ENCODE measurements at regions of chr1 and their contacts with region 1.

Region 1: GRCh38 chr1:168178638-168179437 is at the start of gene TIPRL:
- DNase-seq: peak; percentile 97
- ATAC-seq: peak; percentile 90
- H3K4me3 Mint-ChIP-seq: no peak within 1 kb of the TSS
- H3K27ac Mint-ChIP-seq: no peak within 1 kb of the TSS
- H3K4me1 Mint-ChIP-seq: peaks cover 9% of the 10 kb centered on the region
- H3K27me3 Mint-ChIP-seq: no peaks in the 10 kb centered on the region
- total RNA-seq, gene TIPRL: 52.5 to 57.5 TPM

Region 2: GRCh38 chr1:167627865-167628641 is 550.8 kb before region 1 on chr1:
- CTCF ChIA-PET with region 1: no interaction called
- POLR2A ChIA-PET with region 1: no interaction called
- intact Hi-C with region 1: loop called in 1 of 2 experiments (anchors 2 kb)
- DNase-seq: peak; percentile 87
- ATAC-seq: peak; percentile 85
- H3K4me3 Mint-ChIP-seq: peak overlapping the region; percentile 85
- H3K27ac Mint-ChIP-seq: peak overlapping the region; percentile 98
- H3K4me1 Mint-ChIP-seq: peaks cover 53% of the 10 kb centered on the region
- H3K27me3 Mint-ChIP-seq: no peaks in the 10 kb centered on the region

Region 3: DNA sequence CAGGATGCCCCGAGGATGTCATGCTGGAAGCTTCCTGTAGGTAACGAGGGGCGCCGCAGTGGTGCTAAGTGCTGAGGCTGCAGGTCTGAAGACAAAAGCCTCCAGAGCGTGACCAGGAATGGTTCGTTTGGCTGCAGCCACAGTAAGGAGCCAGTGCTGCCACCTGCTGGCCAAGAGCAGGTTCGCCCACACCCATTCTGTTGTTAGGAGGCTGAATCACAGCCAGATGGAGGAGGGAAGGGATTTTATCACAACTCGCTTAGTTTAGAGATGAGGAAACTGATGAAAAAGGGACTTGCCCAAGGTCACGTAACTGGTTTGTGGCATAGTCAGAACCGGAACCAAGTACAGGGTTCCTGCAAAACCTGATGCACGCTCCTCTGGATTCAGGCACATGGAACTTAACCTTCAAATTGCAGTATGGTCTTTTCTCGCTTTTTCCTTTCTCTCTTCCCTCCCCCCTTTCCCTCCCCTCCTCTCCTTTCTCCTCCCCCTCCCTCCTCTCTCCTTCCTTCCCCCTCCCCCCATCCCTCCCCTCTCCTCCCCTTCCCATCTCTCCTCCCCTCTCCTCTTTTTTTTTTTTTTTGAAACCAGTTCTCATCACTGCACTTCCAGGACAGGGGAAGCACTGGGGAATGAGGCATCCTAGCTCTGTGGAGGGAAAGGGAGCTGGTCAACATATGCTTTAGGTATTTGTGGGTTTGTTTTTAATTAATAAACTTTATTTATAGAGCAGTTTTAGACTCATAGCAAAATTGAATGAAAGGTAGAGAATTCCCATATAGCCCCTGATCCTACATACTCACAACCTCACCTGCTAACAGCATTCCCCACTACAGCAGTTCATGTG is 375.3 kb before region 1 on chr1:
- CTCF ChIA-PET with region 1: no interaction called
- POLR2A ChIA-PET with region 1: no interaction called
- intact Hi-C with region 1: loop called in 1 of 2 experiments (anchors 1 kb)
- DNase-seq: peak; percentile 96
- ATAC-seq: peak; percentile 94
- H3K4me3 Mint-ChIP-seq: peak overlapping the region; percentile 64
- H3K27ac Mint-ChIP-seq: peak overlapping the region; percentile 97
- H3K4me1 Mint-ChIP-seq: peaks cover 24% of the 10 kb centered on the region
- H3K27me3 Mint-ChIP-seq: peaks cover under 1% of the 10 kb centered on the region

Region 4: DNA sequence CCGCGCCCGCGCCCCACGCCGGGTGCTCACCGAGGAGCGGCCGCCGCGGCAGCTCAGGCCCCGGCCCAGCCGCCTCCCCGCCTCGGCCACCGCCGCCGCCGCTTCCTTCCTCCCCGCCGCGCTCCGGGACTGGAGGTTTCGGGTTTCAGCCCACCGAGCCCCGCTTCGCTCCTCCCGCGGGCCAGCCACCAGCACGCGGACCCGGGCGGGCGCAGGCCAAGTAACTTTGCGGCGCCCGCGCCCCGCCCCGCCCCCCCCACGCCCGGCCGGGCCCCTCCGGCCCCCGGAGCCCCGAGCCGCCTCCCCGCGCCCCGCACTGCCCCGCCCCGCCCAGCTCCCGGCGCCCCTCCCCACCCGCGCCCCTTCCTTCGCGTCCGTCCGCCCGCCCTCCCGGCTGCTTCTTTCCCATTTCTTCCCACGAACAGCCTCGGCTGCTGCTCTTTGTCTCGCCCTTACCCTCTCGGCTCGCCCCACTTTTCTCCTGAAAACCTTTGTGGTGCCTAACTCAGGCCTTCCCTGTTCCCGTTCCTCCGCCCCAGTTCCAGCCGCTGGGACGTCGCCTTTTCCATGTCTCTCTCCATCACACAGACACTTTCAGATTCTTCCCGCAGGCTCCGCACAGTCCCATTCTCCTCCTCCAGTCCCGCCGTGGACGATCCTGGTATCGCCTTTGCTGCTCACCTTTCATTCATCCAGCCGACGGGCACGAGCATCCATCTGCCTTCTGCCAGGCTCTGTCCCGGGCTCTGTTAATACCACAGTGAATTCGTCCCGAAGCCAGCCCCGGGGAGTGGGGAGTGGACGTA is 41.9 kb before region 1 on chr1 and contains the start of gene GPR161:
- CTCF ChIA-PET with region 1: no interaction called
- POLR2A ChIA-PET with region 1: no interaction called
- intact Hi-C with region 1: loop called (anchors 1 to 5 kb)
- DNase-seq: peak; percentile 40
- ATAC-seq: no peak
- H3K4me3 Mint-ChIP-seq: peak within 1 kb of the TSS; percentile 73
- H3K27ac Mint-ChIP-seq: peak within 1 kb of the TSS; percentile 61
- H3K4me1 Mint-ChIP-seq: peaks cover 40% of the 10 kb centered on the region
- H3K27me3 Mint-ChIP-seq: peaks cover 37% of the 10 kb centered on the region
- total RNA-seq, gene GPR161: 0.42 to 0.59 TPM

Region 5: DNA sequence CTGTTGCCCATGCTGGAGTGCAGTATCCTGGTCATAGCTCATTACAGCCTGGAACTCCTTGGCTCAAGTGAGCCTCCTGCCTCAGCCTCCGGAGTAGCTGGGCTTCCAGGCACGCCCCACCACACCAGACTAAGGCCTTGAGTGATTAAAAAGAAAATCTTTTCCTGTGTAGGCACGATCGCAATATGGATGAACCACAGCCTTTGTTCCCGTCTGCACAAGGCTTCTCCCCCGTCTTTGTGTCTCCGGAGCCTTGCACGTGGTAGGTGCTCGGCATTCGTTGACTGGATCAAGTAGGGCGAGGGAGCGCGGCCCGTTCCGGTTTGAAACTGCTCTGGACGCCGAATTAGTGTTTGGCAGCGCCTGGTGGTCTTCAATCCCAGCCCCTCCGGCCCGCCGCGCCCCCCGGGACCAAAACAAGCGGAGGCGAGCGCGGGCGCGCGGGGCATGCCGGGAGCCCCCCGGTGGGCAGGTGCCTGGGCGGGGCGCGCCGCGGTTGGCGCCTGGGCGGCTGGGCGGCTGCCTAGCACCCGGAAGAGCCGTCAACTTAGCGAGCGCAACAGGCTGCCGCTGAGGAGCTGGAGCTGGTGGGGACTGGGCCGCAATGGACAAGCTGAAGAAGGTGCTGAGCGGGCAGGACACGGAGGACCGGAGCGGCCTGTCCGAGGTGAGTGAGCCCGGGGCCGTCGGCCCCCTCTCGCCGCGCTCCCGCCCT is 46.8 kb after region 1 on chr1 and contains the start of gene SFT2D2:
- CTCF ChIA-PET with region 1: interaction called, 5 read pairs
- POLR2A ChIA-PET with region 1: interaction called, 10 read pairs
- intact Hi-C with region 1: loop called (anchors 1 kb)
- DNase-seq: peak; percentile 88
- ATAC-seq: peak; percentile 90
- H3K4me3 Mint-ChIP-seq: peak within 1 kb of the TSS; percentile 86
- H3K27ac Mint-ChIP-seq: peak within 1 kb of the TSS; percentile 86
- H3K4me1 Mint-ChIP-seq: peaks cover 49% of the 10 kb centered on the region
- H3K27me3 Mint-ChIP-seq: peaks cover 3% of the 10 kb centered on the region
- total RNA-seq, gene SFT2D2: 25.2 to 42.3 TPM

Region 6: GRCh38 chr1:169485544-169486278 is 1306.9 kb after region 1 on chr1 and contains the start of gene SLC19A2:
- CTCF ChIA-PET with region 1: no interaction called
- POLR2A ChIA-PET with region 1: no interaction called
- intact Hi-C with region 1: loop called in 1 of 2 experiments (anchors 5 kb)
- DNase-seq: peak; percentile 96
- ATAC-seq: peak; percentile 99
- H3K4me3 Mint-ChIP-seq: peak within 1 kb of the TSS; percentile 93
- H3K27ac Mint-ChIP-seq: peak within 1 kb of the TSS; percentile 94
- H3K4me1 Mint-ChIP-seq: peaks cover 48% of the 10 kb centered on the region
- H3K27me3 Mint-ChIP-seq: peaks cover 1% of the 10 kb centered on the region
- total RNA-seq, gene SLC19A2: 4.0 to 4.4 TPM

Measured in activated CD4-positive, alpha-beta T cell treated with anti-CD3 and anti-CD28 coated beads for 36 hours (primary cell).